Motor neuron (in vitro differentiated cells): ENCODE measurements at regions of chr1 and their contacts with region 1.

Region 1: DNA sequence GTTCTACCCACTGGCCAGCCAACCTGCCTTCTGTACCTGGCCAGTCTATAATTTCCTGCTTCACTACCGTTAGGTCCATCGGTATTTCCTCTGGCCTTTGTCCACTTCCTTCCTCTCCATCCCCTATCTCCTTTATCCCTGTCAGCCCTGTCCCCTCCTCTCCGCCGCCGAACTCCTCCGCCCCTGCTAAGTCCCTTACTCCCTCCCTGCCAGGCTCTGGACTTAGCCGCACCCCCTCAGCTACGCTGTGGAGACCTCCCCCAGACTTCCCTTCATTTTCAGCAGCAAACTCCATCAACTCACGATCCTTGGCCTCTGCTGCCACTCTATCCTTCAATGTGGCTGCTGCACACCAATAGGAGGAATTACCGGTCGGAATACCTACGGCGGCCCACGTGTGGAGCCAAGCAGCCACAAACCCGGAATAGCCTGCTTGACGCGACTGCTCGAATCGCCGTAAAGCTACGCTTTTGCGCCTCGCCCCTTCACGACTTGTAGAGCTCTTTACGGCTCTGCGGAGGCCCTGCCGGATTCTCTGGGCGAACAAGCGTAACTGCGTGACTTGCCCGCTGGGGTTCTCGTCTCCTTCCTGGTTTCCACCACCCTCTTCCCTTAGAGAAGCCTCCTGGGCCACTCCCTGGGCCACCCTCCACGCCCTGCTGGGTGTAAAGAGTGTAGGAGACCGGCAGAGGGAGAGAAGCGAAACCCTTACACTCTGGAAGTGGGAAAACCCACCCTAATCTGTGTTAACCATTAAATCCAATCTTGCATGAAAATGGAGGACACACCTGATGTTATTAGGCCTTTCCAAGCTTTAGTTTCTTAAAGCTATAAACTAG is at the start of gene ZNHIT6:
- ATAC-seq: peak; percentile 95 to 97 (median 96)
- H3K4me3 ChIP-seq: peak within 1 kb of the TSS; percentile 47 to 89 (median 73)
- H3K27ac ChIP-seq: peak within 1 kb of the TSS; percentile 64 to 82
- H3K4me1 ChIP-seq: peaks cover 9 to 19% of the 10 kb centered on the region in 2 donors
- total RNA-seq, gene ZNHIT6: 17.4 to 31.0 (median 24.0) TPM

Region 2: GRCh38 chr1:85894651-85895050 is 186.4 kb after region 1 on chr1:
- in situ Hi-C with region 1: loop called in 1 of 9 experiments (anchors 25 kb)
- ATAC-seq: peak in 3 of 8 experiments; percentile 46 to 70 (median 55)
- H3K4me3 ChIP-seq: no peak overlapping the region
- H3K27ac ChIP-seq: no peak overlapping the region
- H3K4me1 ChIP-seq: no peaks in the 10 kb centered on the region

Region 3: GRCh38 chr1:86542626-86543025 is 834.4 kb after region 1 on chr1:
- in situ Hi-C with region 1: no loop called
- ATAC-seq: no peak
- H3K4me3 ChIP-seq: no peak overlapping the region
- H3K27ac ChIP-seq: no peak overlapping the region
- H3K4me1 ChIP-seq: peaks cover 0 to 7% of the 10 kb centered on the region in 2 donors